ENCODE measurements at regions of chr3 and their contacts with region 1.

Region 1: DNA sequence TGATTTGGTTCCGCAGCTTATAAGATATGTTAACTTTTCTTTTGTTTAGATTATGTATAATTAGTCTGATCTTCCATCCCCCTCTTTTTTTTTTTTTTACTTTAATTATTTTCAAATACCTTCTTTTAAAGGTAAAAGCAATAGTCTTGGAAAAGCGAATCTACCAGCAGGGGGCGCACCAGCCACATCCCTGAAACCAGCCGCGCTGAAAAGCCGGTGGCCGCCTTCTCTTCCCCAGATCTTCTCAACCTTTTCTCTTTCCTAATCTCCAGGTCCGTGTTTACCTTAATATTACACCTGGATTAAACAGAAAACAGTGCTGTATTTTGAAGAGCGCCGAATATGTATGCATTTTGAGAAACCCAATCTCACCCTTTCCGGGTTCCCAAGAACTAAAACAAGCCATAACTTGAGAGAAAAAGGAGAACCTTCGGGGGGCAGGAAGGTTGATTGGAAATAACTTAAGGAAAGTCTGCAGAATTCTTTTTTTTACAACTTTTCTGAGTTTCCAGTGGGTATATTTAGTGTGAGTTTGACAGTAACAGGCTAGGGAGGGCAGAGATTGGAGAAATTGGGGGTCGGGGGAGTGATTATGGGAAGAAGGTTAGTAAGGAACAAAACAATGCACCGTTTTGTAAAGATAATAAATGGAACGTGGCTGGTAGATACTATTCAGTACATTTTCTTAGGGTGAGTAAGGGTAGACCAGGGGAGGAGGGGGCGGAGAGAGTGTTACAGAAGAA is 2.0 kb upstream of the SOX2 start:
- DNase-seq: peak; percentile 43
- H3K4me3 Mint-ChIP-seq: peak overlapping the region; percentile 53
- H3K27ac Mint-ChIP-seq: peak overlapping the region; percentile 68
- H3K4me1 Mint-ChIP-seq: peaks cover 11% of the 10 kb centered on the region
- H3K27me3 Mint-ChIP-seq: peaks cover 56% of the 10 kb centered on the region

Region 2: GRCh38 chr3:181726351-181727330 is 16.9 kb after region 1 on chr3:
- intact Hi-C with region 1: loop called (anchors 1 kb)
- DNase-seq: no peak
- H3K4me3 Mint-ChIP-seq: peak overlapping the region; percentile 51
- H3K27ac Mint-ChIP-seq: no peak overlapping the region
- H3K4me1 Mint-ChIP-seq: peaks cover 10% of the 10 kb centered on the region
- H3K27me3 Mint-ChIP-seq: peaks cover 73% of the 10 kb centered on the region

Region 3: DNA sequence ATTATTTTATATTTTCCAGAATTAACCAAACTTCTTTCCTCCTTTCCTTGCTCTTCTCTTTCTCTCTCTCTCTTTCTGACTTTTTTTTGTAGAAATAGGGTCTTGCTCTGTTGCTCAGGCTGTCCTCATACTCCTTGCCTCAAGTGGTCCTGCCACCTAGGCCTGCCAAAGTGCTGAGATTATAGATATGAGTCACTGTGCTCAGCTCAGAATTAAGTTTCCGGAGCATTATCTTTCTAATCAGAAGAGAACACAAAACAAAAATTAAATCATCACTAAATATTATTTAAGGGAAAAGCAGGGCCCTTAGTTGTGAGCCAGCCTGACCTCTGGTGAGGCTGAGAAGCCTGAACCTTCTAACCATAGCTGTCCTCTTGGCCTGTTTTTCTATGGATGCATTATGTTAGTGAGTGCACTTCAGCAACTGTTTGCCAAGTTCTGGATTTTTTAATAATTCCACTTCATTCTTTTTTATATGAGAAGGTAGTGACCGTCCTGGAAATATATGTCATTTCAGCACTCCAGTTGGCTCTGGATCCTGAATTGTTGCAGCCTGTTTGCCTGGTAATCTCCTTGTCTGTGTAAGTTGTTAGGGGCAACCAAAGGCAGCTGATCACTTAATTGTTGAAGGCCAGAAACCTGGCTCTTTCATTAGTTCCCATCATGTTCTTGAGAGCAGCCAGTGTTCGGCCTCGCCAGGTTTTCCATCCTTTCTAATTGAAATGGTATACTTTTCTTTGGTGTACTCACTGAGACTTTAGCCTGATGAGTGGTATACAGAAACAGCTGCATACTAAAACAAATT is 170.4 kb after region 1 on chr3:
- intact Hi-C with region 1: no loop called
- DNase-seq: no peak
- H3K4me3 Mint-ChIP-seq: no peak overlapping the region
- H3K27ac Mint-ChIP-seq: no peak overlapping the region
- H3K4me1 Mint-ChIP-seq: no peaks in the 10 kb centered on the region
- H3K27me3 Mint-ChIP-seq: no peaks in the 10 kb centered on the region

Region 4: DNA sequence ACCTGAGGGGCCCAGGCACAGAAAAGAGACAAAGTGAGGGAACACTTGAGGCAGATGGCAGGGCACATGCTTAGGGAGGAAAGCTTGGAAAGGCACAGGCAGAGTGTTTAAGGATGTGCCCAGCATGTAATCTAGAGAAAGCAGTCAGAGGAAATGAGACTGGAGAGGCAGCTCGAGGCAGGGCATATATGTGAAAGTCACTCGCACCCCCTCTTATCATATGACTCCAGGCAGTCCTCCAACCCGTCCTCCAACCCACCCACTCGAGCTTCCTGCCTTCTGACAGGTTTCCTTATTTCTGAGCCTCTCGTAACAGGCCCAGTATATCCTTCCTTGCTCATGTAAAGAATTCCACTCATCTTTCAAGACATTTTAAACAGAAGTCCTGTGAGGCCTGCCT is 296.0 kb after region 1 on chr3:
- intact Hi-C with region 1: no loop called
- DNase-seq: no peak
- H3K4me3 Mint-ChIP-seq: no peak overlapping the region
- H3K27ac Mint-ChIP-seq: no peak overlapping the region
- H3K4me1 Mint-ChIP-seq: no peaks in the 10 kb centered on the region
- H3K27me3 Mint-ChIP-seq: no peaks in the 10 kb centered on the region

Region 5: GRCh38 chr3:182490596-182491491 is 781.1 kb after region 1 on chr3:
- intact Hi-C with region 1: loop called (anchors 5 kb)
- DNase-seq: no peak
- H3K4me3 Mint-ChIP-seq: no peak overlapping the region
- H3K27ac Mint-ChIP-seq: no peak overlapping the region
- H3K4me1 Mint-ChIP-seq: no peaks in the 10 kb centered on the region
- H3K27me3 Mint-ChIP-seq: no peaks in the 10 kb centered on the region